Activated CD4-positive, alpha-beta T cell treated with anti-CD3 and anti-CD28 coated beads, Interleukin-2, amount 10 ng/mL, durations not matched to agents 24 days and 14 days (primary cell): ENCODE measurements at regions of chr19 and their contacts with region 1.

Region 1: DNA sequence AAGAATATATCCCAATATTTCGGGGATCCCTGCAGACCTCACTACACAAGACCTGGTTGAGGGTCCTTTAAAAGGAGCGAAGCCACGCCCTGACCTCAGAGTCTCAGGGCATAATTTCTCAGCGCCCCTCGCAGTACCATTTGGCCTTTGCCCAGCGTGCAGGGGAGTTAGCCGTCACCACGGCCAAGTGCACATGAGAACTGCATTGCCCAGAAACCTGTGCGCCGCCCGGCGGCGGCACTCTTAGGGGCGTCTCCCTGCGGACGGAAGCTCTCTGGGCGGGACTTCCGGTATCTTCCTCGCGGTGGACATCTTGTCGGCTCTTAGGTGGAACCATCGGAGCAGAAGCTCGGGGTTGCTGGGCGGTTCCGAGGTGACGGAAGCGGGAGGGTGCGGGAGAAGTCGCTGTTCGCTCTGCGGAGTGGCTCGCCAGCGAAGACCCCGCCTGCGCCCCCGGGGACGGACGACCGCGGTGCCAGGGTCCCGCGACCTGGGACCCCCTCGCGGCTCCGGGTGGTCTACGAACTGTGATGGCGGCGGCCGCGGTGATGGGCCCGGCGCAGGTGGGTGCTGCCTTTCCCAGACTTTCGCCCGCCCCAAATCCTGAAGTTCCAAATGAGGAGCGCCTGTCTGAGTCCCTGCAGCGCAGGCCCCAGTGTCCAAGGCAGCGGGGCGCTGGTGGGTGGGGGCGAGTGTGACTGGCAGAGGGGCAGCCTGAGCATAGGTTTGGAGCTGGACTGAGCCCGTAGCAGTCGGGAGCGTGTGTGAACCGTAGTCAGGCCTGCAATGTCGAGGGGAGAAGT is at the start of gene ZNF134:
- DNase-seq: peak; percentile 96
- H3K4me3 Mint-ChIP-seq: peak within 1 kb of the TSS; percentile 82
- H3K27ac Mint-ChIP-seq: peak within 1 kb of the TSS; percentile 71
- H3K4me1 Mint-ChIP-seq: peaks cover 11% of the 10 kb centered on the region
- H3K27me3 Mint-ChIP-seq: no peaks in the 10 kb centered on the region
- total RNA-seq, gene ZNF134: 7.2 and 9.1 TPM in 2 replicates

Region 2: GRCh38 chr19:57537953-57538547 is 76.1 kb before region 1 on chr19:
- intact Hi-C with region 1: no loop called
- DNase-seq: no peak
- H3K4me3 Mint-ChIP-seq: no peak overlapping the region
- H3K27ac Mint-ChIP-seq: no peak overlapping the region
- H3K4me1 Mint-ChIP-seq: no peaks in the 10 kb centered on the region
- H3K27me3 Mint-ChIP-seq: no peaks in the 10 kb centered on the region

Region 3: GRCh38 chr19:57587529-57587928 is 26.6 kb before region 1 on chr19:
- intact Hi-C with region 1: no loop called
- DNase-seq: no peak
- H3K4me3 Mint-ChIP-seq: no peak overlapping the region
- H3K27ac Mint-ChIP-seq: no peak overlapping the region
- H3K4me1 Mint-ChIP-seq: peaks cover 11% of the 10 kb centered on the region
- H3K27me3 Mint-ChIP-seq: no peaks in the 10 kb centered on the region

Region 4: GRCh38 chr19:57599761-57600383 is 14.3 kb before region 1 on chr19 and contains the start of gene ZNF530:
- intact Hi-C with region 1: loop called (anchors 1 kb)
- DNase-seq: peak; percentile 95
- H3K4me3 Mint-ChIP-seq: peak within 1 kb of the TSS; percentile 85
- H3K27ac Mint-ChIP-seq: peak within 1 kb of the TSS; percentile 74
- H3K4me1 Mint-ChIP-seq: peaks cover 14% of the 10 kb centered on the region
- H3K27me3 Mint-ChIP-seq: no peaks in the 10 kb centered on the region
- total RNA-seq, gene ZNF530: 4.5 and 5.7 TPM in 2 replicates

Region 5: GRCh38 chr19:57632987-57633831 is 19.1 kb after region 1 on chr19 and contains the start of gene ZNF211:
- intact Hi-C with region 1: loop called (anchors 1 kb)
- DNase-seq: peak; percentile 95
- H3K4me3 Mint-ChIP-seq: peak within 1 kb of the TSS; percentile 87
- H3K27ac Mint-ChIP-seq: peak within 1 kb of the TSS; percentile 87
- H3K4me1 Mint-ChIP-seq: peaks cover 14% of the 10 kb centered on the region
- H3K27me3 Mint-ChIP-seq: no peaks in the 10 kb centered on the region
- total RNA-seq, gene ZNF211: 7.7 and 10.0 TPM in 2 replicates

Region 6: DNA sequence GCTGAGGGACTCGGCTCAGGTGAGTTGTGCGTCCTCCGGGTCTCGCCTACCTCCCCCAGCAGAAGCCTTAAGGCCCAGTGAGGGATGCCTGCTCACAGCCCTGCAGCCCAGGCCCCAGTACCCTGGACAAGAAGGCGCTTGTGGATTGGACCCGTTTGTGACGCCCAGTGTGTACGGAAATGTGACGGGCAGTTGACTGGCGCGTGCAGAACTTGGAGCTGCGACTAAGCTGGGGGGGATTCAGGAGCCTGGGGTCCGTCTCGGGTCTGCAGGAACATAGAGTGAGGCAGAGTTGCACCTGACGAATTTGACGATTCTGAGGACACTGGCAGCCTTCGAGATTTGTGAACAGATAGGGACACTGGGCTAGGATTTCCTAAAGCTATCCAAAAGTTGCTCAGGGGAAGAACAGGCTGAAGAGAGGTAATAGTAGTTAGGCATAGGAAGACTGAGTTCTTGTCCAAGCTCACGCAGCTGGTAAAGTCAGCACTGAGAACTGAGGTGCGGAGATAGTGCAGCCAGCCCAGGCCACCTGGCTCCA is 68.2 kb after region 1 on chr19:
- intact Hi-C with region 1: loop called (anchors 5 kb)
- DNase-seq: no peak
- H3K4me3 Mint-ChIP-seq: peak overlapping the region; percentile 96
- H3K27ac Mint-ChIP-seq: peak overlapping the region; percentile 93
- H3K4me1 Mint-ChIP-seq: peaks cover 22% of the 10 kb centered on the region
- H3K27me3 Mint-ChIP-seq: no peaks in the 10 kb centered on the region

Region 7: DNA sequence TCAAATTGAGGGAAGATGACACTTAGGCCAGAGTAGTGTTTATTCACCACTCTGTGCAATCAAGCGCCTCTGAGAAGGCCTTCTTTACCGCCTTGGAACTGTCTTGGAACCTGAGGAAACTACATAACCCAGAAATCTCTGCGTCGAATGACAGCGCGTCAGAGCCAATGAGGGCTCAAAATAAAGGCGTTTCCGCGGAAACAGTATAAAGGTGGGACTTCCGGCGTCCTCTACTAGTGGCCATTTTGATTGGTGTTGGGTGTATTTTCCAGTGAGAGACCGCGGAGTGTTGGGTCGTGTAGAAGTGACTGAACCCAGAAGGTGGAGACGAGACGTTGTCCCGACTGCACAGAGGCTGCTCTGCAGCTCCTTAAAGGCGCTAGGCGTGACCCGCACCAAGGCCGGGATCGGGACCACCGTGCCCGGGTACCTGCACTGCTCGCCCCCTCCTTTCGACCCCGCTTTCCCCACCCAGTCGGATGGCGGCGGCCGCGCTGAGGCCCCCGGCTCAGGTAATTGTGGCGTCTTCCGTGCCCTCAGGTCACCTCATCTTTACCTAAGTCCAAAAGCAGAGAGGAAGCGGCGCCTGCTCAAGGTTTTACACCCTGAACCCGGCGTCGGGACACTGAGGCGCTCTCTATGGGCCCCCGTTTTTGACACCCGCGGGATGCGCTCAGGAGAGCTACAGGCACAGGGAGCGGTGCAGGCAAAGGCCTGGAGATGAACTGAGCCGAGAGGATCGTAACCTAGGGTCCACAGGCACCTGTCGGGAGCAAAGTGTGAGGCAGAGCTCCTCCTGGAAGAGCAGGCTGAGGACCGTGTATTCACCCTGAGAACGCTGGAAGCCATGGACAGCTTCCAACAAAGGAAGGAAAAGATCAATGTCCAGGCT is 132.7 kb after region 1 on chr19 and contains the start of gene ZNF776:
- intact Hi-C with region 1: loop called (anchors 10 kb)
- DNase-seq: peak; percentile 95
- H3K4me3 Mint-ChIP-seq: peak within 1 kb of the TSS; percentile 96
- H3K27ac Mint-ChIP-seq: peak within 1 kb of the TSS; percentile 97
- H3K4me1 Mint-ChIP-seq: peaks cover 16% of the 10 kb centered on the region
- H3K27me3 Mint-ChIP-seq: no peaks in the 10 kb centered on the region
- total RNA-seq, gene ZNF776: 7.5 and 7.9 TPM in 2 replicates